ENCODE measurements at regions of chr13 and their contacts with region 1.

Region 1: DNA sequence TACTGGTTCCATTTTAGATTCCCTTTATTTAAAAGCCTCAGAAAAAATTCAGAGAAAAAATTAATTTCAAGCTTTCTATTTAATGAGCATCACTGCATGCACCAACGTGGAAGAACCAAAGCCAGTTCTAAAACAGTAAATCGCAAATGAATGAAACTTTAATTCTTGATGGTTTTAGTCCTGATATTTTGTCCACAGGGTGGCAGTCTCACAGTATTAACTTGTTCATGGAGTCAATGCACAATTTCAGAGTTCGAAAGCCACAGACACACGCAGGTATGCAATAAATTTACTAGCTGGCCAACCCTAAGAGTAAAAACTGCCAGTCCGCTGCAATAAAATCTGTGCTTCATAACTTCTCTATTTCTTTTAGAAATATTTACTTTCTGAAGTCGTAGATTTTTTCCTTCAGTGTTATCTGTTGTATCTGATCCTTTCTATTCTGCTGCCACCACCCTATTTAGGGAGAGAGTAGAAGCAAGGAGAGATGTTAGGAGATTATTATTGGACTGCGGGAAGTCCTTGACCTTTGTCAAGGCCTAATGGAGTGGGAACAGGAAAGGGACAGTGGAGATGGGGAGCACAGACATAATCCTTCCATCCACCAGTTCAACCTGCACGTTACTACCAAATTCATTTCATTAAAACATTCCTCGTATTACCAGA is 7.0 kb upstream of the WBP4 start:
- DNase-seq: peak; percentile 27
- CTCF ChIP-seq: peak; percentile 59

Region 2: DNA sequence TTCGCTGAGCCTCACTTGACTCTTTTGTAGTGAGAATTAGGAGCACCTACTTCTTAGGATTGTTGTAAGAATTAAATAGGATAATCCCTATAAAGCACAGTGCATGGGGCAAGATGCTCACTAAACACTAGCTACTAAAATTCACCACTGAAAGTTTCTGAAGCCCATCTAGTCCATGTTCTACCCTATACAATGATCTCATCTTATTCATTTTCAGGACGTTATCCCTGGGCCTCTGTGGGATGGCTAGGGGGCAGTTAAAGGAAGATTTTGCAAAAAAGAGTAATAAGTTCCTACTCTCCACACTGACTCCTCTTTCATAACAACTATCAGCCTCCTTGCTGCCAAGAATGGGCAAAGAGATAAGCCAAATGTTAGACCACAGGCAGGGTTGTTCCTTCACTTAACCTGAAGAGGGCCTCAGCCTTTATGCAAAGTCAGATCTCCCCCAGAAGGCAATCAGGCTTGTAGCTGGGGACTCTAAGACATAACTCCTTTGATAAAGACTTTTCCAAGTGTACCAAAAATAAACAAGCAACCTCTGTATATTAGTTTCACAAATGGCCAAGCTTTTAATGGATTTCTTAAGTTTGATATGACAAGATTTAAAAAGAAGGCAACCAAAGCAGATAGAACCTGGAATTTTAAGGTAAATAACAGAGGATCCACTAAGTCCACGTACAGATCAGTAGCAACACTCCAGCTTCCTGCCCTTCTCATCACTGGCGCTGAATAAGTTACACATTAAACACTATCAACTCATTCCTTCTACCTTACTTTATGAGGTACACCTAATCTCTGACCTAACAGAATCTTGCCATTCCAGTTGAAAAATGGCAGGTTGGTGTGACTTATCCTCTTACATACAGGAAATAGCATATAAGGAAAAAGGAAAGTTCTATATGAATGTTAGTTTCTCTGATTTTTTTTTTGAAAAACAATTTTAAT is 79.6 kb before region 1 on chr13:
- CTCF ChIA-PET with region 1: interaction called, 21 read pairs
- POLR2A ChIA-PET with region 1: no interaction called
- DNase-seq: no peak
- CTCF ChIP-seq: peak; percentile 71

Region 3: DNA sequence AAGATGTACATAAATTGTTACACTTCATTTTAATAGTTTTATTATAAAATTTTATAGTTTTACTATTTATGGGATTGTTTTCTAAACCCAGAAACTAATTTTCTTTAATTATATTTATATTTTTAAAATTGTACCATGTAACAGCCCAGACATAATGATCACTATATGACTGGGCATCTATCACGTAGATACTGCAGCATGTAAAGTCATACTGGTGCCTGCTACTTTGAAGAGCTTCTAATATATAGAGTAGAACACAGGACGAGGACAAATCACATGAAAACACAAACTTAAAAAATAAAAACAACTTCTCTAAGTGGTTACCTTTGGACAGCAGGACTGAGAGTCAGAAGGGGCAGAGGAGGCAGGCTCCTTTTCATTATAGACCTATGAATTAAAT is 40.5 kb before region 1 on chr13:
- CTCF ChIA-PET with region 1: interaction called, 13 read pairs
- POLR2A ChIA-PET with region 1: no interaction called
- DNase-seq: no peak
- CTCF ChIP-seq: no peak

Region 4: GRCh38 chr13:41040606-41041319 is 13.6 kb before region 1 on chr13:
- CTCF ChIA-PET with region 1: interaction called, 15 read pairs
- POLR2A ChIA-PET with region 1: no interaction called
- DNase-seq: no peak
- CTCF ChIP-seq: no peak

Region 5: GRCh38 chr13:41222259-41222852 is 168.0 kb after region 1 on chr13:
- CTCF ChIA-PET with region 1: interaction called, 10 read pairs
- POLR2A ChIA-PET with region 1: no interaction called
- DNase-seq: peak; percentile 68
- CTCF ChIP-seq: peak; percentile 79